CD4-positive, alpha-beta memory T cell (primary cell): ENCODE measurements at regions of chr5 and their contacts with region 1.

Region 1: DNA sequence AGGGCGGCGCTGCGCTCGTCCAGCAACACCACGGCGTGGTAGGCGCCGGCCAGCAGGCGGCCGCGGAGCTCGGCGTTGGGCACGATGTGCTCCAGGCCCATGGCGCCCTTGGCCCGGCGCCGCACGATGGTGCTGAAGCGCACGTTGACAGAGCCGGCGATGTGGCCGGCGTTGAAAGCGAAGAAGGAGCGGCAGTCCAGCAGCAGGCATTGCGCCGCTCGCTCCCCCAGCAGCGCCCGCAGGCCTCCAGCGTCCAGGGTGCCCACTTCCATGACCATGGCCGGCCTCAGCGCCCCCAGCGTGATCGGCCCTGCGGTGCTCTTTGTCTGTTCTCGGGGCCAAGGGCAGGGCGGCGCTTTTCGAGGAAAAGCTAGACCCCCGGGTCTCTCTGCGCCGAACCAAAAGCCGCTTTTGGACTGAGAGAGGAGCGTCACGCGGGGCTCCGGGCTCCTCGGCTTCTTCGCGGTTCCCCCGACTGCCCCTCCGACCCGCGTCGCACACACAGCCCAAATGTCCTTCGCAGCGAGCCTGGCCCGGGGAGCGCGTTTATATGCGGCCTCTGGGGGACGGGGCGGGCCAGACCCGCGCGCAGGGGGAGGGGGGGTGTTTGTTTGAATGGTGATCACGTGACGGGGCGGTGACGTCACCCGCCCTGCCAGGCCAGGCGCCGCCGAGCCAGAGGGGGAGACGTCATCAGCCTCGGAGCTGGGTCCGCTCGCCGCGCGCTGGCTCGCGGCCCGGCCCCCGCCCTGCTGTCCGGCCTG is at the start of gene DUSP1:
- DNase-seq: peak; percentile 97 to 98 (median 98)
- H3K4me3 ChIP-seq: peak within 1 kb of the TSS; percentile 83 to 92
- H3K4me3 Mint-ChIP-seq: peak within 1 kb of the TSS; percentile 93 to 98 (median 96)
- H3K27ac ChIP-seq: peak within 1 kb of the TSS; percentile 100
- H3K27ac Mint-ChIP-seq: peak within 1 kb of the TSS; percentile 99 to 100 (median 100)
- H3K4me1 ChIP-seq: peaks cover 64% of the 10 kb centered on the region
- H3K4me1 Mint-ChIP-seq: peaks cover 47 to 89% (median 60%) of the 10 kb centered on the region in 4 donors
- H3K27me3 ChIP-seq: no peaks in the 10 kb centered on the region
- H3K27me3 Mint-ChIP-seq: peaks cover 0 to 3% of the 10 kb centered on the region in 2 donors
- total RNA-seq, gene DUSP1: 18.0 to 18.8 TPM

Region 2: DNA sequence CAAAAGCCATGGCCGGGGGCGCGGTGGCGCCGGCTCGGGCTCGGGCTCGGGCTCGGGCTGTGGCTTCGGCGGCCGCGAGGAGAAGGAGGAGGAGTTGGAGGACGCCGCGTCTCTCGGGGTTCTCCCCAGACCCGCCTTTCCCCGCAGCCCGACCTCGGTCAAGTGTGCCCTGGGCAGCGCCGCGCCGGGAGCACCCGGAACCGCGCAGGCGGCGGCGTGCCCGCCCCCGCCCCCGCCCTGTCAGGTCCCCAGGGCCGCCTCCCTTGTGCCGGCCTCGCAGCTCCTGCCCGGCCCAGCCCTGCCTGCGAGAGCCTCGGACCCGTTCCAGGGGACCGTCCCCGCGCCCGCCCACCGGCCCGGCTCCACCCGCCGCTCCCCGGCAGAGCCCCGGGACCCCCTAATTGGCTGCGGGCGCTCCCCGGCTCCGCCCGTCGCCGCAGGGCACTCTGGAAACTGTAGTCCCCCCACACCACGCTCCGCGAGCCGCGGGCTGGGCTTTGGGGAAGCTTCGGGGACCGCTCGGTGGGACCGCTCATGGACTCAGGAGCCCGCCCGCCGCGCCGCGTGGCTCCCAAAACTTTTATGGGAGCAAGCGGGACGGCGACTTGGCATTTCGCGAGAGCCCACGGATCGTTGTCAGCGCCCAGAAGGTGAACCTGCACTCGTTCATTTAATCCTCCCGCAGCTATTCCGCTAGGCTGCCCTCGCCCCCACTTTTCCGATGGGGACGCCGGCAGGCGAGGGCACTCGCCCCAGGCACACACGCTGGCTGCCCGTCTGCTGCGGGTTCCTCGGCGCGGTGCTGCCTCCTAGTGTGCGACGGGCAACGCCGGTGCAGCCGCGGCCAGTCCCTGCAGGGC is 582.6 kb before region 1 on chr5 and contains the start of gene STK10:
- CTCF ChIA-PET with region 1: no interaction called
- POLR2A ChIA-PET with region 1: interaction called, 7 read pairs
- intact Hi-C with region 1: loop called (anchors 5 kb)
- DNase-seq: peak; percentile 89 to 92 (median 92)
- H3K4me3 ChIP-seq: peak within 1 kb of the TSS; percentile 94 to 96
- H3K4me3 Mint-ChIP-seq: peak within 1 kb of the TSS; percentile 98 to 100 (median 99)
- H3K27ac ChIP-seq: peak within 1 kb of the TSS; percentile 94
- H3K27ac Mint-ChIP-seq: peak within 1 kb of the TSS; percentile 97 to 100 (median 99)
- H3K4me1 ChIP-seq: peaks cover 25% of the 10 kb centered on the region
- H3K4me1 Mint-ChIP-seq: peaks cover 8 to 46% (median 21%) of the 10 kb centered on the region in 4 donors
- H3K27me3 ChIP-seq: no peaks in the 10 kb centered on the region
- H3K27me3 Mint-ChIP-seq: no peaks in the 10 kb centered on the region
- total RNA-seq, gene STK10: 306 to 314 TPM

Region 3: DNA sequence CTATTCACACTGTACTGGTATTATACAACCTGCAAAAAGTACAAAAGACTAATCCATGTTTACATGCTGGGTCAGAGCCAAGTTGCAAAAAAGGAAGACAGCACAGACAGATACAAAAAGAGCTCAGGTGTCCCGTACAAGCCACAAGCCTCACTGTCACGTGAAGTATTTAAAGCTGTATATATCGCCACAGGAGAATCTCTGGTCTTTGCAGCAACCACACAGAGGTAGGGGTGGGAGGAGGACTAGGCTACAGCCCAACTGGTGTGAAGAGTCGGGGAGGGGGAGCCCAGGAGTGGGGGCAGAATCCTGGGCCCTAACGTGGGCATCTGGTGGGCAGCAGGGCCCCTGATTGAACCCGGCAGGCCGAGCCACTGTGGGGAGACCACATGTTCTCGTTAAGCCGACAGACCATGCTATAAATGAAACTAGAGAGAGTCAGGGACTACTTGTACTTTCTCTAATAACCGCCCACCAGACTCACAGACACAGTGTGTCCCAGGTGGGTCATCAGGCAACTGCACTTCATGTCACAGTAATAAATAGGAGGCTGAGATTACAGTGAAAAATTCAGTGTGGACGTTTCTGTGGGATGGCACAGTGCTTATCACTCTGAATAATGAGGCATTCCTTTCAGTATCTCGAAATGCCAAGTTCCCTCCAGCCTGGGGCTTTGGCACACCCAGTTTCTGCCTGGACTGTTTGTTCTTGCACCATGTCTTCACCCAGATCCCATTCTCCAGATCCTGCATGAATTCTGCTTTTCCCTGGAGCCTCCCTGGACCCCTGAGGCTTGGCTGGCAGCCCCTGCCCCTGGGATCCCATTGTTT is 237.2 kb before region 1 on chr5:
- CTCF ChIA-PET with region 1: no interaction called
- POLR2A ChIA-PET with region 1: no interaction called
- intact Hi-C with region 1: no loop called
- DNase-seq: no peak
- H3K4me3 ChIP-seq: no peak overlapping the region
- H3K4me3 Mint-ChIP-seq: peak overlapping the region in 1 of 8 donors; percentile 16
- H3K27ac ChIP-seq: no peak overlapping the region
- H3K27ac Mint-ChIP-seq: no peak overlapping the region
- H3K4me1 ChIP-seq: no peaks in the 10 kb centered on the region
- H3K4me1 Mint-ChIP-seq: peaks cover 0 to 8% (median 0%) of the 10 kb centered on the region in 4 donors
- H3K27me3 ChIP-seq: no peaks in the 10 kb centered on the region
- H3K27me3 Mint-ChIP-seq: peaks cover 4 to 15% of the 10 kb centered on the region in 2 donors

Region 4: DNA sequence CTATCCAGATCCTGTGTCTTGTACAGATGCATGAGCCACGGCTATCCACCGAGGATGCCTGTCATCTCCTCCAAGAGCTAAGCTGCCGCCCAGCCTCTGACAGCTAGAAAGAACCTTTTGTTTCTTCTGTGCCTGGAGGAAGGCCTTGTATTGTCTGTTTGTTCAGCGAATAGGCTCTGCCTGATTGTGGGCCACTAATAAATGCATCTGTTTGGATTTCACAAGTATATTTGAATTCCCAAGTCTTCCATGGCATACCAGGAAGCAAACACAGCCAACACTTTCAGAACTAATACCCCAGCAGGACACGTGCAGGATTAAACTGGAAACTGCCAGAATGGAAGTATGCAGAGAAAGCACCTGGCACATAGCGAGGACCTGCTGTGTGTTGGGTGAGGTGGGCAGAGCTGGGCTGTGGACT is 222.5 kb before region 1 on chr5:
- CTCF ChIA-PET with region 1: no interaction called
- POLR2A ChIA-PET with region 1: no interaction called
- intact Hi-C with region 1: no loop called
- DNase-seq: no peak
- H3K4me3 ChIP-seq: no peak overlapping the region
- H3K4me3 Mint-ChIP-seq: no peak overlapping the region
- H3K27ac ChIP-seq: no peak overlapping the region
- H3K27ac Mint-ChIP-seq: no peak overlapping the region
- H3K4me1 ChIP-seq: no peaks in the 10 kb centered on the region
- H3K4me1 Mint-ChIP-seq: no peaks in the 10 kb centered on the region
- H3K27me3 ChIP-seq: no peaks in the 10 kb centered on the region
- H3K27me3 Mint-ChIP-seq: peaks cover 11 to 15% of the 10 kb centered on the region in 2 donors

Region 5: DNA sequence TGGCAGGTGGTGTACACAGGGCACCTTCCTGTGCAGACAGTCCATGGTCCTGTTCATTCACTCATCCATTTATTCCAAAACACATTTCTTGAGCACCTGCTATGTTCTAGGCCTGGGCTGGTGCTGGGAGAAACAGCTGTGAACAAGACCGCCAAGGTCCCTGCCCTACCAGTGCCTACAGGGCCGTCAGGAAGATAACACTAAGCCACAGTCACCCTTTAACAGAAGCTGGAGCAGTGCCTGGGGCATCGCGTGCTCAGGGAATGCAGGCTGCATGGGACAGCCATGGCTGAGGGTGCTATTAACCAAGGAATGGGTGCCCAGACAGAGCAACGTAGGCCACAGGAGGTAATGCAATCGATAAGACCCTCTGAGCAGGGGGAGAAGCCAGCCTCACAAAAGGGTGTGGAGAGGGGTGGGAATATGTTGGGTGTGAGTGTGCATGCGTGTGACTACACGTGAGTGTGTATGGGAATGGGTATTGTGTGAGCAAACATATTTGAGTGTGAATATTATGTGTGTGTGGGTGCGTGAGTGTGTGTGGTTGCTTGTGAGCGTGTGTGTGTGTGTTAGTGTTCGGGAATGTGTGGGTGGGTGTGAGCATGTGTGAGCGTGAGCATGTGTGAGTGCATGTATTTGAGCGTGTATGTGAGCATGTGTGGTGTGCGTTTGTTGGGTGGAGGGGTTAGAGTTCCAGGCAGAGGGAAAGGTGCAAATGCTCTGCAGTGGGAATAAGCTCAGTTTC is 18.9 kb before region 1 on chr5:
- CTCF ChIA-PET with region 1: interaction called, 10 read pairs
- POLR2A ChIA-PET with region 1: interaction called, 56 read pairs
- intact Hi-C with region 1: no loop called
- DNase-seq: no peak
- H3K4me3 ChIP-seq: no peak overlapping the region
- H3K4me3 Mint-ChIP-seq: peak overlapping the region in 1 of 8 donors; percentile 4
- H3K27ac ChIP-seq: no peak overlapping the region
- H3K27ac Mint-ChIP-seq: peak overlapping the region in 2 of 7 donors; percentile 20 to 70
- H3K4me1 ChIP-seq: no peaks in the 10 kb centered on the region
- H3K4me1 Mint-ChIP-seq: no peaks in the 10 kb centered on the region
- H3K27me3 ChIP-seq: no peaks in the 10 kb centered on the region
- H3K27me3 Mint-ChIP-seq: peaks cover 0 to 1% of the 10 kb centered on the region in 2 donors

Region 6: GRCh38 chr5:172806897-172807672 is 36.2 kb after region 1 on chr5:
- CTCF ChIA-PET with region 1: interaction called, 13 read pairs
- POLR2A ChIA-PET with region 1: interaction called, 60 read pairs
- intact Hi-C with region 1: loop called (anchors 1 kb)
- DNase-seq: peak; percentile 72 to 88 (median 78)
- H3K4me3 ChIP-seq: peak overlapping the region in 1 of 2 donors; percentile 21
- H3K4me3 Mint-ChIP-seq: peak overlapping the region; percentile 75 to 91 (median 82)
- H3K27ac ChIP-seq: peak overlapping the region; percentile 52
- H3K27ac Mint-ChIP-seq: peak overlapping the region; percentile 79 to 98 (median 95)
- H3K4me1 ChIP-seq: peaks cover 11% of the 10 kb centered on the region
- H3K4me1 Mint-ChIP-seq: peaks cover 9 to 16% (median 14%) of the 10 kb centered on the region in 4 donors
- H3K27me3 ChIP-seq: no peaks in the 10 kb centered on the region
- H3K27me3 Mint-ChIP-seq: peaks cover 0 to 1% of the 10 kb centered on the region in 2 donors

Region 7: DNA sequence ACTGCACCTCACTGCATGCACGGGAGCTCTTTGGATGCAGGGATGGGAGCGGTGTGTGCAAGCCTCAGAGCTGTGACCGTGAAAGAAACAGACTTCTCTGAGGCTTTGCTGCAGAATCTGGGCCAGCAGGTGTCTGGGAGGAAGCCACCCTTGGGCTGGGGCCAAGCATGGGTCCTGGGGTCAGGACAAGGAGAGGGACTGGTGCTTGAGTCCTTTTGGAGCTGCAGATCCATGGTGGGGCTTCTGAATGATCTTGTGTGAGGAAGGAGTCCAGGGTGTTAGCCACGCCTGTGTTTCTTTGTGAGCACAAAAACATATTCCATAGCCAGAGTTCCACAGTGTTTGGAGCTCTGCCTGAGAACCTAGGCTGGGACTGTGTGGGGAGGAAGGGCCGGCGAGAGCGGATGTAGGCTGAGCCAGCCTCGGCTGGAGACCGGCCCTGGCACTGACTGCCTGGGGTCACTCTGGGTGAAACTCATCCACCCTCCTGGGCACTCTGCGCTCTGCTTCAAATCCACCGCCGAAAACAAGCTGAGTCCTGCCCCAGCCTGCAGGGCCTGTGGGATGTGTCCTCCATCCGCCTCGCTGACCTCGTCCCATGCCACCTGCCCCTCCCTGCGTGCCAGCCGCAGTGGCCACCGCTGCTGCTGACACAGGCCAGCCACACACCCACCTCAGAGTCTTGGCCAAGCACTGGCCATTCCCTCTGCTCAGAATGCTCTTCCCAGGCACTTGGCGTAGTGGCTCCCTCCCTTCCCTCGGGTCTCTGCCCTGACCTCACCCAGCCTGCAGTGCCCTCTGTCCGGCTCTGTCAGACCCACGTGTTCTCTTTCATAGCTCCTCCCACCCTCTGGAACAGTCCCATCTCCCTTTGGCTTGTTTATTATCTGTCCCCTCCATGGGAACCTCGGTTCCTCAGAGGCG is 89.9 kb after region 1 on chr5:
- CTCF ChIA-PET with region 1: no interaction called
- POLR2A ChIA-PET with region 1: interaction called, 18 read pairs
- intact Hi-C with region 1: no loop called
- DNase-seq: no peak
- H3K4me3 ChIP-seq: no peak overlapping the region
- H3K4me3 Mint-ChIP-seq: no peak overlapping the region
- H3K27ac ChIP-seq: no peak overlapping the region
- H3K27ac Mint-ChIP-seq: peak overlapping the region in 3 of 7 donors; percentile 71 to 74 (median 72)
- H3K4me1 ChIP-seq: peaks cover 19% of the 10 kb centered on the region
- H3K4me1 Mint-ChIP-seq: peaks cover 22 to 48% (median 36%) of the 10 kb centered on the region in 4 donors
- H3K27me3 ChIP-seq: no peaks in the 10 kb centered on the region
- H3K27me3 Mint-ChIP-seq: no peaks in the 10 kb centered on the region

Region 8: GRCh38 chr5:172984243-172984953 is 213.5 kb after region 1 on chr5:
- CTCF ChIA-PET with region 1: no interaction called
- POLR2A ChIA-PET with region 1: interaction called, 15 read pairs
- intact Hi-C with region 1: no loop called
- DNase-seq: peak; percentile 75 to 91 (median 81)
- H3K4me3 ChIP-seq: peak overlapping the region; percentile 78 to 96
- H3K4me3 Mint-ChIP-seq: peak overlapping the region; percentile 92 to 99 (median 98)
- H3K27ac ChIP-seq: peak overlapping the region; percentile 94
- H3K27ac Mint-ChIP-seq: peak overlapping the region; percentile 95 to 99 (median 99)
- H3K4me1 ChIP-seq: peaks cover 55% of the 10 kb centered on the region
- H3K4me1 Mint-ChIP-seq: peaks cover 23 to 69% (median 46%) of the 10 kb centered on the region in 4 donors
- H3K27me3 ChIP-seq: no peaks in the 10 kb centered on the region
- H3K27me3 Mint-ChIP-seq: no peaks in the 10 kb centered on the region